Breast epithelium (tissue), 4 donors: ENCODE measurements at regions of chr1 and their contacts with region 1.

Region 1: DNA sequence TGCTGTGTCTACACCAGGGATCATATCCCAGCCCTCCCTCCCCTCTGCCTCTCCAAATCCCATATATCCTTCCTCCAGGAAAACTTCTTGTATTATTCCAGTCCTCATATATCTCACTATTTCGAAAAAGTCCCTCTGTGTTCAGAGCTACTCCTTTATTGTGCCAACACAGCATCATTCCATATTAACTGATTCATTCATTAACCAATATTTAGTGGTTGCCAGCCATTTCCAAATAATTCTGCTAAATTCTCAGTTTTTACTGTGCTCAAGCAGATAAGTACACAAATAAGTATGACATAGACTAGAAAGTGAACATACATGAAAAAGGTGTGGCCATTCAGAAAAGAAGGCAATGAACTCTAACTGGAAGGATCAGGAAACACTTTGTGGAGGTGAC is 241.6 kb upstream of the DUSP10 start:
- DNase-seq: no peak
- H3K4me3 ChIP-seq: no peak overlapping the region
- H3K27ac ChIP-seq: no peak overlapping the region
- H3K4me1 ChIP-seq: no peaks in the 10 kb centered on the region
- H3K27me3 ChIP-seq: no peaks in the 10 kb centered on the region
- CTCF ChIP-seq: no peak
- POLR2A ChIP-seq: no peak

Region 2: GRCh38 chr1:221905802-221906201 is 77.6 kb before region 1 on chr1:
- intact Hi-C with region 1: loop called (anchors 2 kb)
- DNase-seq: no peak
- H3K4me3 ChIP-seq: no peak overlapping the region
- H3K27ac ChIP-seq: no peak overlapping the region
- H3K4me1 ChIP-seq: no peaks in the 10 kb centered on the region
- H3K27me3 ChIP-seq: no peaks in the 10 kb centered on the region
- CTCF ChIP-seq: no peak
- POLR2A ChIP-seq: no peak